ENCODE measurements at regions of chr3 and their contacts with region 1.

Region 1: GRCh38 chr3:120558771-120559241 is 37.3 kb upstream of the NDUFB4 start:
- DNase-seq: peak; percentile 72 to 85
- H3K4me3 ChIP-seq: peak overlapping the region; percentile 16
- H3K4me3 Mint-ChIP-seq: peak overlapping the region; percentile 68
- H3K27ac Mint-ChIP-seq: peak overlapping the region; percentile 56
- H3K4me1 ChIP-seq: no peaks in the 10 kb centered on the region
- H3K4me1 Mint-ChIP-seq: peaks cover 14% of the 10 kb centered on the region
- H3K27me3 ChIP-seq: no peaks in the 10 kb centered on the region
- H3K27me3 Mint-ChIP-seq: peaks cover 3% of the 10 kb centered on the region
- CTCF ChIP-seq: peak; percentile 86 to 91

Region 2: DNA sequence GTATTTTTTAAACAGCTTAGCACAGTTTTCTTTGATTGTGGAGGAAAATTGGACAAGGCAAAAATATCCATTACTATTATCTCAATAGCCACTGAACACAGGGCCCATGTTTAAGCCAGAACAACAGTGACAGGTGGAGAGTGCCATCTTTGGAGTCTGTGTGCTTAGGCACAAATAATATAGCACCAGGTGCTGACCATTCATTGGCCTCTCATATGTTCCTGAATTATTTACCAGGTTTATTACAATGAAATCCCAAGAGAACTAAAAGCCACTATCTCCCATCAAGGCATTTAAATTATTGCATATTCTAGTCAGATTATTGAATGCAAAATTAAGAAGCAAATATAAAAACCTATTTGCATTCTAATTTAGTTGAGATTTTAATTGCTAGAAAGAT is 313.4 kb before region 1 on chr3:
- CTCF ChIA-PET with region 1: interaction called, 8 read pairs
- POLR2A ChIA-PET with region 1: no interaction called
- intact Hi-C with region 1: loop called (anchors 1 kb)
- DNase-seq: no peak
- H3K4me3 ChIP-seq: no peak overlapping the region
- H3K4me3 Mint-ChIP-seq: no peak overlapping the region
- H3K27ac Mint-ChIP-seq: no peak overlapping the region
- H3K4me1 ChIP-seq: no peaks in the 10 kb centered on the region
- H3K4me1 Mint-ChIP-seq: no peaks in the 10 kb centered on the region
- H3K27me3 ChIP-seq: no peaks in the 10 kb centered on the region
- H3K27me3 Mint-ChIP-seq: no peaks in the 10 kb centered on the region
- CTCF ChIP-seq: no peak

Region 3: GRCh38 chr3:120795017-120795648 is 236.3 kb after region 1 on chr3:
- CTCF ChIA-PET with region 1: no interaction called
- POLR2A ChIA-PET with region 1: no interaction called
- intact Hi-C with region 1: loop called (anchors 1 kb)
- DNase-seq: peak; percentile 55 to 62
- H3K4me3 ChIP-seq: no peak overlapping the region
- H3K4me3 Mint-ChIP-seq: no peak overlapping the region
- H3K27ac Mint-ChIP-seq: no peak overlapping the region
- H3K4me1 ChIP-seq: peaks cover 15% of the 10 kb centered on the region
- H3K4me1 Mint-ChIP-seq: no peaks in the 10 kb centered on the region
- H3K27me3 ChIP-seq: no peaks in the 10 kb centered on the region
- H3K27me3 Mint-ChIP-seq: no peaks in the 10 kb centered on the region
- CTCF ChIP-seq: peak; percentile 30 to 54